Mammary epithelial cell (primary cell): ENCODE measurements at regions of chr4 and their contacts with region 1.

Region 1: GRCh38 chr4:10106421-10107039 is 10.1 kb downstream of the WDR1 start:
- DNase-seq: peak; percentile 98
- H3K4me3 ChIP-seq: peak overlapping the region in 2 of 3 experiments; percentile 28 to 31
- H3K27ac ChIP-seq: peak overlapping the region; percentile 71
- H3K4me1 ChIP-seq: peaks cover 79% of the 10 kb centered on the region
- H3K27me3 ChIP-seq: no peaks in the 10 kb centered on the region
- CTCF ChIP-seq: no peak

Region 2: DNA sequence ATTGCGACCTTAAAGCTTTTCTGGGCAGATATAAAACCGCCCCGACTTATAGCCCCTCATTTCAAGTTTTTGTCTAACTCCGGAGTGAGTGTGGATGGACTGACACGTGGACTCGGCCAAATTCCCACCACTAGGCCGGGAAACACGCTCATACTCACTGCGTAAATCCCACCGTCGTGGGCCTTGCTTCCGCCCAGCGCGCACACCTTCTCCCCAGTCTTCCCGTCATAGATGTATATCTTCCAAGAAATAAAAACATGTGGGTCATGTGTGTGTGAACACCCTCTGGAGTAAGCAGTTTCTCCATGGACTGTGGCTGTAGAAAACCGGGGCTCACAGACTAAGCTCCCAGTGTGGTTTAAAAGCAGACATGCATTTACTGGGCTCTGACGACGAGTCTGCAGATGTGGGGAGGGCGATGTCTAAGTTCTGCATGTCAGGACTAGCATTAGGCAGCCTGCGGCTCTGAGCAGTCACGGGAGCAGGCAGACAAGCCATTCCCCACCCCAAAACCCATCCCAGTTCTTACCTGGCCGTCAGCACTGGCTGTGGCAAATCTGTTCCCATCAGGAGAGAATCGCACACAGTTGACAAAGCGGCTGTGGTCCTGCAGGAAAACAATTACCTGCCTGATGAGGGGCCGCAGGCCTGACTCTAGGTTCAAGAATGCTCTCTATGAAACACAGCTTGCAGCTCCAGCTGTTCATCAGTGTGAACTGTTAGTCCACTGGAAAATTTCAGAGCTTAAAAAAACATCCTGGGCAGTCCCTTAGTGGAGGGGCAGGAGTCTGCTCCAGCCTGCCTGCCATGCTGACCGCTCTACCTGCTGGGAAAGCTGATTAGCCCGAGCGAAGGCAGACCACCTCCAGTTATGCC is 18.2 kb before region 1 on chr4:
- CTCF ChIA-PET with region 1: no interaction called
- dilution Hi-C with region 1: no loop called
- in situ Hi-C with region 1: no loop called
- intact Hi-C with region 1: loop called (anchors 1 kb)
- DNase-seq: peak; percentile 93
- H3K4me3 ChIP-seq: no peak overlapping the region
- H3K27ac ChIP-seq: peak overlapping the region; percentile 68
- H3K4me1 ChIP-seq: peaks cover 33% of the 10 kb centered on the region
- H3K27me3 ChIP-seq: no peaks in the 10 kb centered on the region
- CTCF ChIP-seq: no peak

Region 3: DNA sequence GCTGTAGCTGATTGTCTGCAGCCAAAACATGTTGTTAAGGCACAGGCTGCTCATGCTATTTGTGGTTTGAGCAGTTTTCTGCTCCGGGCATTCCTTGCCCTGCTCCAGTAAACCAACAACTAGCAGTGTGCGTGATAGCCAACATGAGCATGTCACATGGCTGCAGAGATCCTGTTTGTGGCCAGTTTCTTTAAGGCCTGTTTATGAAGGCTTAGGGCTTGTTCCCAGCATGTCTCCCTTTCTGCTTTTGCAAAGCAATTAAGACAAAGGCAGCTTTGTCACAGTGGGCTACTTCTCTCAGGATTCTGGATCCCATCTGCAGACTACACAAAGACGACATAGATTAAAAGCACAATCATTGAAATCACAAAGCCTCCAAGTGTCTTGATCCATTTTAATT is 190.2 kb after region 1 on chr4:
- CTCF ChIA-PET with region 1: no interaction called
- dilution Hi-C with region 1: no loop called
- in situ Hi-C with region 1: no loop called
- intact Hi-C with region 1: no loop called
- DNase-seq: peak; percentile 71
- H3K4me3 ChIP-seq: no peak overlapping the region
- H3K27ac ChIP-seq: no peak overlapping the region
- H3K4me1 ChIP-seq: peaks cover 18% of the 10 kb centered on the region
- H3K27me3 ChIP-seq: no peaks in the 10 kb centered on the region
- CTCF ChIP-seq: no peak